WTC11 (cell line): ENCODE measurements at regions of chr9 and their contacts with region 1.

Region 1: DNA sequence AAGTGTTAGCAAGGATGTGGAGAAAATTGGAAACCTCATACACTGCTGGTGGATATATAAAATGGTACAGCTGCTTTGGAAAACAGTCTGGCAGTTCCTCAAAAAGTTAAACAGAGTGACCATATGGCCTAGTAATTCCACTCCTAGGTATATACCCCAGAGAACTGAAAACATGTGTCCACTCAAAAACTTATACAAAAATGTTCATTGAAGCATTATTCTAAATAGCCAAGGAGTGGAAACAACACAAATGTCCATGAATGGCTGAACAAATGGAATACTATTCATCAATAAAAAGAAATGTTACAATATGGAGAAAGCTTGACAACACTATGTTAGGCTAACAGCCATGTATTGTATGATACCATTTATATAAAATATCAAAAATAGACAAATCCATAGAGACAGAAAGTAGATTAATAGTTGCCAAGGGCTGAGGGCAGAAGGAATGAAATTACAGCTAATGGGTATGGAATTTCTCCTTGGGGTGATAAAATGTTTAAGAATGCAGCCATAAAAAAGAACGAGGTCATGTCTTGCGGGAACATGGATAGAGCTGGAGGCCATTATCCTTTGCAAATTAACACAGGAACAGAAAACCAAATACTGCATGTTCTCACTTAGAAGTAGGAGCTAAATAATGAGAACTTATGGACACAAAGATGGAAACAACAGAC is 33.6 kb upstream of the FBP1 start:
- DNase-seq: no peak
- ATAC-seq: no peak
- H3K4me3 Mint-ChIP-seq: no peak overlapping the region
- H3K27ac Mint-ChIP-seq: no peak overlapping the region
- H3K4me1 Mint-ChIP-seq: no peaks in the 10 kb centered on the region
- H3K27me3 Mint-ChIP-seq: no peaks in the 10 kb centered on the region
- CTCF ChIP-seq: no peak

Region 2: GRCh38 chr9:94656200-94656599 is 16.7 kb before region 1 on chr9:
- CTCF ChIA-PET with region 1: interaction called, 19 read pairs
- POLR2A ChIA-PET with region 1: no interaction called
- DNase-seq: no peak
- ATAC-seq: peak; percentile 73
- H3K4me3 Mint-ChIP-seq: no peak overlapping the region
- H3K27ac Mint-ChIP-seq: no peak overlapping the region
- H3K4me1 Mint-ChIP-seq: peaks cover 21% of the 10 kb centered on the region
- H3K27me3 Mint-ChIP-seq: no peaks in the 10 kb centered on the region
- CTCF ChIP-seq: no peak

Region 3: GRCh38 chr9:94783102-94783664 is 110.2 kb after region 1 on chr9:
- CTCF ChIA-PET with region 1: no interaction called
- POLR2A ChIA-PET with region 1: no interaction called
- DNase-seq: peak; percentile 66
- ATAC-seq: peak; percentile 93
- H3K4me3 Mint-ChIP-seq: no peak overlapping the region
- H3K27ac Mint-ChIP-seq: no peak overlapping the region
- H3K4me1 Mint-ChIP-seq: peaks cover 20% of the 10 kb centered on the region
- H3K27me3 Mint-ChIP-seq: no peaks in the 10 kb centered on the region; the same call in 1 of the 2 replicates
- CTCF ChIP-seq: peak; percentile 56